Mammary epithelial cell (primary cell): ENCODE measurements at regions of chr14 and their contacts with region 1.

Region 1: GRCh38 chr14:26017270-26017669 is 580.6 kb downstream of the NOVA1 start:
- DNase-seq: no peak
- H3K4me3 ChIP-seq: no peak overlapping the region
- H3K27ac ChIP-seq: no peak overlapping the region
- H3K4me1 ChIP-seq: no peaks in the 10 kb centered on the region
- H3K27me3 ChIP-seq: no peaks in the 10 kb centered on the region
- CTCF ChIP-seq: no peak

Region 2: DNA sequence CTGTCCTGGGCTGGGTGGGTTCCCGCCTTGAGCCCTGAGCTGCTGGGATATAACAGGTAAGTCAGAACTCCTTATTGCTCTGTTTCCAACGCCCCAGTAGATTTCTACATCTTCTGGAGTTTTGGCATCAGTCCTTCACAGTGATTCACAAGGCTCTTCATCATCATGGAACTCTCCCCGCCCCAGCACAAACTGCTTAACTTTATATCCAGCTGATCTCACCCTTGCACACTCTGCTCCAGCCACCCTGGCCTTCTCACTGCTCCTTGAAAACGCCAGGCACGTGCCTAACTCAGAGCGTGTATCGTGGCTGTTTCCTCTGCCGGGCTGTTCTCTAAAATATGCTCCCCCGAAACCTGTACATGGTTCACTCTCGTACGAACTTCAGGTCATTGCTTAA is 315.7 kb after region 1 on chr14:
- CTCF ChIA-PET with region 1: interaction called, 33 read pairs
- dilution Hi-C with region 1: no loop called
- in situ Hi-C with region 1: no loop called
- intact Hi-C with region 1: no loop called
- DNase-seq: no peak
- H3K4me3 ChIP-seq: no peak overlapping the region
- H3K27ac ChIP-seq: no peak overlapping the region
- H3K4me1 ChIP-seq: no peaks in the 10 kb centered on the region
- H3K27me3 ChIP-seq: no peaks in the 10 kb centered on the region
- CTCF ChIP-seq: no peak